ENCODE measurements at regions of chr19 and their contacts with region 1.

Region 1: GRCh38 chr19:12847159-12848139 is 9.1 kb downstream of the MAST1 start:
- DNase-seq: peak; percentile 16
- H3K4me3 ChIP-seq: peak overlapping the region; percentile 9; the same call in 1 of the 2 replicates
- H3K27me3 ChIP-seq: peaks cover 2% of the 10 kb centered on the region; the same call in 1 of the 2 replicates
- CTCF ChIP-seq: peak; percentile 77

Region 2: DNA sequence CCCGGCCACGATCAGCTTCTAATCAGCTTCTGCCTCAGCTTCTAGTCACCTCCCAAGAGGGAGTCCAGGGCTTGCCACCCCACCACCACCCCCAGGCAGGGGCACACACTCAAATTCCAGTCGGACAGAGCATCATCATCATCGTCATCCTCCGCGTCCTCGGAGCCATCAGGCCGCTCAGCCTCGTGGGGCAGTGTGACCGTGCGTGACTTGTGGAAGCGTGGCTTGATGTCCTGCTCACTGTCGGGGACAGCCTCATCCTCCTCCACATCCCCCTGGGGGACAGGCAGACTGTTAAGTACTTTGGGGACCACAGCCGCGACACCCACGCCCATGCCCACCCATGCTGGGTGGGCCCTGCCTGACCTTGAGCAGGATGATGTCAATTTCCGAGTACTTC is 136.3 kb before region 1 on chr19:
- CTCF ChIA-PET with region 1: interaction called, 16 read pairs
- POLR2A ChIA-PET with region 1: no interaction called
- DNase-seq: no peak
- H3K4me3 ChIP-seq: no peak overlapping the region
- H3K27me3 ChIP-seq: no peaks in the 10 kb centered on the region
- CTCF ChIP-seq: no peak

Region 3: GRCh38 chr19:12766051-12766521 is 81.4 kb before region 1 on chr19:
- CTCF ChIA-PET with region 1: interaction called, 355 read pairs
- POLR2A ChIA-PET with region 1: interaction called, 19 read pairs
- DNase-seq: no peak
- H3K4me3 ChIP-seq: peak overlapping the region; percentile 49
- H3K27me3 ChIP-seq: no peaks in the 10 kb centered on the region
- CTCF ChIP-seq: peak; percentile 88

Region 4: DNA sequence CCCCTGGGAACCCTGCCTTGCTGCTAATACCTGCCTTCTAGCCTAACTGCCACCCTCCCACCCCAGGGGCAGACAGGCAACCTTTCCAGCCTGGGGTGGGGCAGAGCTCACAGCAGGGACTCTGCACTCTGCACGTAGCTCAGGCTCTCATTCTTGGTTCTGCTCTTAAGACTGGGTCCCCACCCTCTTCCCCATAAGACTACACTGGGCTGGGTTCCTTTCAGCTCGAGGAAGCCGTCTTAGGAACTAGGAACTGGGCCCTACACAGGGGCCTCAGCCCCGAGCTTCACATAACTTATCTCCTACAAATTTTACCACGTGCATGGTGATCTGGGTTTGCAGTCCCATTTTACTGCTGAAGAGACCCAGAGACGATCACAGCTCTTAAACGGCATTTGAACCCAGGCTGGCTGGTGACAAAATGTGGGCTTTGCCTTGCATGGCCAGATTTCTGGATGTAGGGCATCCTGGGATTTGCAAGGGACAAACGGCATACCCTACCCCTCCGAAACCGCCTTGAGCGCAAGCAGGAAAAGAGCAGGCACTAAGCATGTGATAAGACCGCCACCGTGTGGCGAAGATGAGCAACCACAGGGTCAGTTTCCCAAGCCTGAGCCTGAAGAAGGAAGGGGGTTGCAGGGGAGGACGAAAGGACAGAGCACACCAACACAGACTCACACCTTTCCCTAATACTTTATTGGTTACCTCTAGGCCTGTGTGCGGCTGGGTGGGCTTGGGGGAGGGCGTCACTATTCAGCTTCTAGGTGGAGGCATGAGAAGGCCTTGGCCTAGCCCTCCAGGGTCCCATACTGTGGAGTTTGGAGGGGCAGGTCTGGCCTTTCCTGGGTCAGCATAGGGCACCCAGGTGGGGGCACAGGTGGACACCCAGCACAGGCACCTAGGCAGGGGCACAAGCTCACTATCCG is 51.0 kb before region 1 on chr19:
- CTCF ChIA-PET with region 1: interaction called, 10 read pairs
- POLR2A ChIA-PET with region 1: interaction called, 3 read pairs
- DNase-seq: no peak
- H3K4me3 ChIP-seq: no peak overlapping the region
- H3K27me3 ChIP-seq: no peaks in the 10 kb centered on the region
- CTCF ChIP-seq: peak; percentile 90

Region 5: GRCh38 chr19:12825254-12826131 is 22.0 kb before region 1 on chr19:
- CTCF ChIA-PET with region 1: interaction called, 28 read pairs
- POLR2A ChIA-PET with region 1: no interaction called
- DNase-seq: no peak
- H3K4me3 ChIP-seq: no peak overlapping the region
- H3K27me3 ChIP-seq: no peaks in the 10 kb centered on the region
- CTCF ChIP-seq: peak; percentile 47

Region 6: DNA sequence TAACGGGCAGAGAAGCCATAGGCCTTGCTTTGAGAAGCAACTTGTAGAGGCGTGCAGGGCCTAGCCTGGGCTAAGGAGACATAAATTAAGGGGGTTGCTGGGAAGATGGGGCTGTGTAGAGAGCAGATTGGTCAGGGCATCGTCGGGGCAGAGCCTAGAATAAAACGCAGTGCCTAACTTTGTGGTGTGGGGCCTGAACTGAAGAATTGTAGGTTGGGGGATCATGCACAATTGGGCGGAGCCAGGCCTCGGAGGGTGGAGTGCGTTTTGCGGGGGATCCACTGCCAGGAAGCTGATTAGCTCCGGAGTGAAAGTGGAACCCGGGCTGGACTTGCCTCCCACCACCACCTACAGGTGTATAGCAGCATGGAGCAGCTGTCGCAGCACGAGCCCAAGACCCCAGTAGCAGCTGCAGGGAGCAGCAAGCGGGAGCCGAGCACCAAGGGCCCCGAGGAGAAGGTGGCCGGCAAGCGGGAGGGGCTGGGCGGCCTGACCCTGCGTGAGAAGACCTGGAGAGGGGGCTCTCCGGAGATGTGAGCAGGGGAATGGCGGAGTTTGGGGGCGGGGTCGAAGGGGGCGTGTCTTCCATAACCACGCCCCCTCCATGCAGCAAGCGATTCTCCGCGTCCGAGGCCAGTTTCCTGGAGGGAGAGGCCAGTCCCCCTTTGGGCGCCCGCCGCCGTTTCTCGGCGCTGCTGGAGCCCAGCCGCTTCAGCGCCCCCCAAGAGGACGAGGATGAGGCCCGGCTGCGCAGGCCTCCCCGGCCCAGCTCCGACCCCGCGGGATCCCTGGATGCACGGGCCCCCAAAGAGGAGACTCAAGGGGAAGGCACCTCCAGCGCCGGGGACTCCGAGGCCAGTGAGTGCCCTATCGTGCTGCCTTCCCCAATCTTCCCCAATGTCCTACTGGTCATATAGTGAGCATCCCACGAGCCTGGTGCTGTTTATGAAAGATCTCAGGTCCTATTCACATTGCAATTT is 20.0 kb after region 1 on chr19:
- CTCF ChIA-PET with region 1: interaction called, 13 read pairs
- POLR2A ChIA-PET with region 1: no interaction called
- DNase-seq: no peak
- H3K4me3 ChIP-seq: peak overlapping the region; percentile 38
- H3K27me3 ChIP-seq: 0 out of 2 replicates have a peak, but pooled peaks cover 1% of the 10 kb centered on the region
- CTCF ChIP-seq: no peak

Region 7: GRCh38 chr19:12907166-12907565 is 59.7 kb after region 1 on chr19:
- CTCF ChIA-PET with region 1: no interaction called
- POLR2A ChIA-PET with region 1: no interaction called
- DNase-seq: no peak
- H3K4me3 ChIP-seq: no peak overlapping the region
- H3K27me3 ChIP-seq: no peaks in the 10 kb centered on the region
- CTCF ChIP-seq: no peak

Measured in BJ (cell line).